ENCODE measurements at regions of chr1 and their contacts with region 1.

Region 1: DNA sequence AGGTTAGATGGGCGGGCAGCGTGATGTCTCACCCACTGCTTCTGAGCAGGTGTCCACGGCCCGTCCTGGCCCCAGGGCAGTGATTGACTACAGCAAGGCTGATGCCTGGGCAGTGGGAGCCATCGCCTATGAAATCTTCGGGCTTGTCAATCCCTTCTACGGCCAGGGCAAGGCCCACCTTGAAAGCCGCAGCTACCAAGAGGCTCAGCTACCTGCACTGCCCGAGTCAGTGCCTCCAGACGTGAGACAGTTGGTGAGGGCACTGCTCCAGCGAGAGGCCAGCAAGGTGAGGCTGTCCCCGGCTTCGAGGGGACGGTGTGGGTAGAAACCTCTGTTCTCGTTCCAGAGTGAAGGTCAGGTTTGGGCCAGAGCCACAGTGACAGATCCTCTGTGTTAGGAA is 12.2 kb downstream of the DDOST start:
- DNase-seq: no peak

Region 2: DNA sequence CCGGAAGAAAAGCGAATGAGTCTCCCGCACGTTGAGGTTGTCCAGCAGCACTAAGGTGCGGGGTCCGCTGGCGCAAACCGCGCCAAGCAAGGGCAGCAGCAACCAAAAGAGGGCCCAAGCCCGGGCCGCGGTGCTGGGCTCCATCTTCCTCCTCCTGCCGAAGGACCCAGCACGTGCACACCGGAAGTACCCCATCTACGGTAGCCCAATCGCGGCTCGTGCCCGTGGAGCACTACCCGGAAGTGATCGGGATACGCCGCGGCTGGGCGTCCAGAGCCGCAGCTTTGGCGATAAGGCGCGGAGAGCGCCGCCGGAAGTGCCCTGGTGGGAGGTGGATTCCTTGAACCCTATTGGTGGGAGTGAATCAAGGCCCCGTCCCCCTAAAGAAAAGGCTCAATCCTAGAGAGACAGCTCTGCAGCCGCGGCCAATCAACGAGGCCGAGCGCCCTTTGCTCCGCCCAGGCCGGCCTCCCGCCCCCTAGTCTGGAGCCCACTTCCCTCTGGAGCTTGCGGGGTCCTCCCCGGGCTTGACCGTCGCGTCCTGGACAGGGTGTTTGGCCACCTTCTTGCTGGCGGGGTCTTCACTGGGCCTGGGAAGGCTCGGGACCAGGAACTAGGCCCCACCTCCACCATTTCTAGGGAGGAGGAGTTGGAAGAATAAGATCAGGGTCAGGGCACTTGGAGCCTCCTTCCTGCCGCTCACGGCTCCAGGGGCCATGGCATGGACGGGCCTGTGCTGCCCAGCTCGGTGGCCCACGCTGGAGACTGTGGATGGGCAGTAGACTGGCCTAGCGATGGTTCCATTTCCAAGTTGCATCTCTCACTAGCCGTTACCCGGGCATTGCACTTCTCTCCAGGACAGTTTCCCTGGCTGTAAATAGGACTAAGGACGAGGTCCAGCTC is 12.5 kb after region 1 on chr1 and contains the start of gene DDOST:
- CTCF ChIA-PET with region 1: no interaction called
- POLR2A ChIA-PET with region 1: interaction called, 15 read pairs
- DNase-seq: peak; percentile 96